Activated B cell treated with CpG ODN at 0.5 μM for 24 hours (primary cell): ENCODE measurements at regions of chr1 and their contacts with region 1.

Region 1: GRCh38 chr1:169348383-169349036 is 19.1 kb downstream of the NME7 start:
- DNase-seq: no peak
- ATAC-seq: no peak
- H3K4me3 Mint-ChIP-seq: no peak overlapping the region
- H3K27ac Mint-ChIP-seq: no peak overlapping the region
- H3K4me1 Mint-ChIP-seq: no peaks in the 10 kb centered on the region
- H3K27me3 Mint-ChIP-seq: no peaks in the 10 kb centered on the region
- CTCF ChIP-seq: peak; percentile 35

Region 2: GRCh38 chr1:168428063-168428731 is 920.3 kb before region 1 on chr1:
- CTCF ChIA-PET with region 1: no interaction called
- POLR2A ChIA-PET with region 1: no interaction called
- intact Hi-C with region 1: no loop called
- DNase-seq: no peak
- ATAC-seq: no peak
- H3K4me3 Mint-ChIP-seq: no peak overlapping the region
- H3K27ac Mint-ChIP-seq: no peak overlapping the region
- H3K4me1 Mint-ChIP-seq: no peaks in the 10 kb centered on the region
- H3K27me3 Mint-ChIP-seq: peaks cover 6% of the 10 kb centered on the region
- CTCF ChIP-seq: no peak

Region 3: GRCh38 chr1:168439456-168440375 is 908.8 kb before region 1 on chr1:
- CTCF ChIA-PET with region 1: interaction called, 8 read pairs
- POLR2A ChIA-PET with region 1: no interaction called
- intact Hi-C with region 1: loop called (anchors 1 kb)
- DNase-seq: no peak
- ATAC-seq: no peak
- H3K4me3 Mint-ChIP-seq: no peak overlapping the region
- H3K27ac Mint-ChIP-seq: no peak overlapping the region
- H3K4me1 Mint-ChIP-seq: peaks cover 5% of the 10 kb centered on the region
- H3K27me3 Mint-ChIP-seq: peaks cover 16% of the 10 kb centered on the region
- CTCF ChIP-seq: no peak

Region 4: GRCh38 chr1:168603501-168604110 is 744.9 kb before region 1 on chr1:
- CTCF ChIA-PET with region 1: interaction called, 82 read pairs
- POLR2A ChIA-PET with region 1: no interaction called
- intact Hi-C with region 1: loop called (anchors 1 kb)
- DNase-seq: peak; percentile 31
- ATAC-seq: peak; percentile 45
- H3K4me3 Mint-ChIP-seq: no peak overlapping the region
- H3K27ac Mint-ChIP-seq: no peak overlapping the region
- H3K4me1 Mint-ChIP-seq: no peaks in the 10 kb centered on the region
- H3K27me3 Mint-ChIP-seq: peaks cover 8% of the 10 kb centered on the region
- CTCF ChIP-seq: no peak